ENCODE measurements at regions of chr12 and their contacts with region 1.

Region 1: GRCh38 chr12:111753144-111753881 is 13.4 kb upstream of the ALDH2 start:
- DNase-seq: peak; percentile 39
- H3K4me3 ChIP-seq: no peak overlapping the region
- H3K27ac ChIP-seq: no peak overlapping the region
- H3K27me3 ChIP-seq: no peaks in the 10 kb centered on the region
- CTCF ChIP-seq: peak; percentile 88

Region 2: GRCh38 chr12:111788178-111788654 is 34.9 kb after region 1 on chr12:
- CTCF ChIA-PET with region 1: interaction called, 21 read pairs
- POLR2A ChIA-PET with region 1: no interaction called
- DNase-seq: no peak
- H3K4me3 ChIP-seq: no peak overlapping the region
- H3K27ac ChIP-seq: peak overlapping the region; percentile 47
- H3K27me3 ChIP-seq: no peaks in the 10 kb centered on the region
- CTCF ChIP-seq: peak; percentile 53